ENCODE measurements at regions of chr19 and their contacts with region 1.

Region 1: DNA sequence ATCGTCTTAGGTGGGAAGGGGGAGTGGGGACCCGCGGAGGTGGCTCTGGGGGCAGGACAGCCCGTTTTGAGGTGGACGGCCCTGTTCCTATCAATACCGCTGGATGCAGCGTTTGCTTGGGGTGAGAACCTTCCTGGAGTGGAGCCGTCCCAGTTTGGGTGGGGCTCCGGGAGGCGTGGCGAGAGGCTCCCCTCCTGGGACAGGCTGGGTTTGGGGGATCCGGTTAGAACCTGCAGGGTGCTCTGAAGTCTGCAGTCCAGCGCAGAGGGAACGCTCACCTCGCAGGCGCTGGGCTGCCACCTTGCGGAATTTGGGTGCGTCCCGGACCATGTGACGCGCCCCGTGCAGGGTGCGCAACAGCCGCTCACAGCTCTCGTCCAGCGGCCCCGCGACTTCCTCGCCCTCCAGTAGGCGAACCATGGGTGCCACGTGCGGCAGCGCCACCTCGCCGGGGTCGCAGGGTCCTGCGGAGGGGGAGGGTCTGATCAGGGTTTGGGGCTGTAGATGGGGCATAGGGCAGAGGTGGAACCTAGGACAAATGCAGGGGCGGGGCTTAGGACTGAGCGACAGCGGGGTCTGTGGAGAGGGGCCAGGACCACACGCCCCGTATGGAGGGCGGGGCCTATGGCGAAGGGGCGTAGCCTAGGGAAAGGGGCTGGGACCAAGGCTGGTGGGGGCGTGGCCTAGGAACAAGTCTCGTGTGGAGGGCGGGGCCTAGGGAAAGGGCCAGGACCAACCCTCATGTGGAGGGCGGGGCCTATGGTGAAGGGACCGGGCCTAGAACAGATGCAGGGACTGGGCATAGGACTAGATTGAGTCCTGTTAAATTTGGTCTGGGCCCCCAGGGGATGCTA is 13.8 kb downstream of the SH2D3A start:
- DNase-seq: peak; percentile 97 to 100
- H3K4me3 ChIP-seq: peak overlapping the region; percentile 11 to 61 (median 47)
- H3K27ac ChIP-seq: peak overlapping the region; percentile 82
- H3K4me1 ChIP-seq: peaks cover 0 to 7% (median 5%) of the 10 kb centered on the region in 4 experiments; a peak in 6 of 7 replicates
- H3K27me3 ChIP-seq: no peaks in the 10 kb centered on the region
- CTCF ChIP-seq: peak; percentile 43 to 62 (median 52)
- EP300 ChIP-seq: 0 out of 3 replicates have a peak, but pooled peaks of 1 of the 2 experiments have one; percentile 3
- POLR2A ChIP-seq: peak; percentile 48 to 75
- RAD21 ChIP-seq: peak; percentile 54

Region 2: DNA sequence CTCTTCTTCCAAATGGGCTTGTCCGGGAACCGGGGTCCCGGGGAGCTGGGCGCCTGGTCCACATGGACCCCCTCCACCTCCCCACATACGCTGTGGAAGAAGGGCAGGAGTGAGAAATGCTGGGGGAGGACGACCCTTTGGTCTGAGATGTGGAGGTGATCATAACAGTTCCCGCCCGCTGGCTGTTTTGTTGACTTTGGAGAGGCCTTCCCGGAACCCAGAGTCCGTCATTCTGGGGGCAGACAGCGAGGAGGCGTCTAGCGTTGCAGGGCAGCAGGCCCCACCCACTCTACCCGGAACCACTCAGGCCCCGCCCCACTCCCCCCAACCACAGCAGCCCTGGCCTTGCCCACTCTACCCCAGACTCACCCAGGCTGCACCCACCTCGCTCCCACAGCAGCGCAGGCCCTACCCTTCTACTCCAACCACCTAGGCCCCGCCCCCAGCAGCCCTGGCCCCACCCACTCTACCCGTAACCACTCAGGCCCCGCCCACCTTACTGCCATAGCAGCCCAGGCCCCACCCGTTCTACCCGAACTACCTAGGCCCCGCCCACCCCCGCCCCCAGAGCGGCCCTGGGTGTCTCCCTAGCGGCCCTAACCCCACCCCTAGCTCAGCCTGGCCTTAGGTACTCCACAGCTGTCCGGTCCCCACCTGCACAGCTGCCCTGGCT is 23.1 kb before region 1 on chr19:
- CTCF ChIA-PET with region 1: interaction called, 8 read pairs
- POLR2A ChIA-PET with region 1: interaction called, 14 read pairs
- DNase-seq: peak; percentile 82 to 91
- H3K4me3 ChIP-seq: peak overlapping the region; percentile 13 to 41 (median 28); a peak in 4 of 8 replicates
- H3K27ac ChIP-seq: no peak overlapping the region
- H3K4me1 ChIP-seq: peaks cover 0 to 15% (median 9%) of the 10 kb centered on the region in 4 experiments; a peak in 6 of 7 replicates
- H3K27me3 ChIP-seq: no peaks in the 10 kb centered on the region
- CTCF ChIP-seq: no peak
- EP300 ChIP-seq: no peak
- POLR2A ChIP-seq: no peak
- RAD21 ChIP-seq: no peak

Region 3: DNA sequence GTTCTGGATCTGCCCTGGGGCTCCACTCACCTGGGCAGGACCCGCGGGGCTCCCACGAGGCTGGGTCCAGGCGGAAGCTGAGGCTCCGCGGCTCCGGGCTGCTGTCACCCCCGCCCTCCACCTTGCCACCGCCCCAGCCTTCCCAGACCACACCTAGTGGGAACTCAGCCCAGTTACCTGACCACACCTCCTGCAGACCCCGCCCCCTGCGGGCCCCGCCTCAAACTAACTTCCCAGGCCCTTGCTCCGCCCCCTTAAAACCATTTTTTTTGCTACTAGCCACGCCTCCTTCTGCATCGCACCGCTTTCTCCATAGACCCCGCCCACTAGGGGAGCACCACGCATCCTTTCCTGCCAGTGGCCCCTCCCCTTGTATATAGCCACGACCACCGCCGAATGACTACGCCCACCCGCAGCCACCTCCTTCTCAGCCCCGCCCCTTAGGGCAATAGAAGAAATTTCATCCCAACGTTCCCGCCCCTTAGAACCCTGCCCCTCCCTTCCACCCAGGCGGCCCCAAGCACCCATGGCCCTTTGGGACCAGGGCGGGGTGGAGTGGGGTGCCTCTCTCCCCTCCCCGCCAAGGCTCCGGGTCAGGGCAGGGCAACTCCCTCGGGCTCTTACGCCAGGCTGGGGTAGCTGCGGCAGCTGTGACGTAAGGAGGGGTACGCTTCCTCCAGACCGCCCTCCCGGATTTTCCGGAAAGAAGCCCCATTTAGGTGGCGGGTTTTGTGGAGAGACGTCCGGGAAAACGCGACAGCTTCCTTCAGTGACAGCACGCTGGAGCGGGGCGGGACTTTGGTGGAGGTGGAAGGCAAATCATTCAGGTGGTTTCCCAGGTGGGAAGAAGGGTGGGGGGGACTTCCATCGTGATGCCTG is 14.2 kb after region 1 on chr19 and contains the start of gene SH2D3A:
- CTCF ChIA-PET with region 1: interaction called, 19 read pairs
- POLR2A ChIA-PET with region 1: interaction called, 53 read pairs
- DNase-seq: peak; percentile 96 to 98
- H3K4me3 ChIP-seq: peak within 1 kb of the TSS; percentile 61 to 84 (median 83)
- H3K27ac ChIP-seq: peak within 1 kb of the TSS; percentile 57
- H3K4me1 ChIP-seq: peaks cover 3 to 7% (median 5%) of the 10 kb centered on the region in 4 experiments; a peak in 6 of 7 replicates
- H3K27me3 ChIP-seq: no peaks in the 10 kb centered on the region
- CTCF ChIP-seq: no peak
- EP300 ChIP-seq: 0 out of 3 replicates have a peak, but pooled peaks of 1 of the 2 experiments have one; percentile 29
- POLR2A ChIP-seq: peak in 1 of 2 experiments; percentile 79; a peak in 2 of 3 replicates
- RAD21 ChIP-seq: no peak
- total RNA-seq, gene SH2D3A: 20.0 and 22.1 TPM in 2 replicates

Measured in H1 (cell line).